ENCODE measurements at regions of chr12 and their contacts with region 1.

Region 1: DNA sequence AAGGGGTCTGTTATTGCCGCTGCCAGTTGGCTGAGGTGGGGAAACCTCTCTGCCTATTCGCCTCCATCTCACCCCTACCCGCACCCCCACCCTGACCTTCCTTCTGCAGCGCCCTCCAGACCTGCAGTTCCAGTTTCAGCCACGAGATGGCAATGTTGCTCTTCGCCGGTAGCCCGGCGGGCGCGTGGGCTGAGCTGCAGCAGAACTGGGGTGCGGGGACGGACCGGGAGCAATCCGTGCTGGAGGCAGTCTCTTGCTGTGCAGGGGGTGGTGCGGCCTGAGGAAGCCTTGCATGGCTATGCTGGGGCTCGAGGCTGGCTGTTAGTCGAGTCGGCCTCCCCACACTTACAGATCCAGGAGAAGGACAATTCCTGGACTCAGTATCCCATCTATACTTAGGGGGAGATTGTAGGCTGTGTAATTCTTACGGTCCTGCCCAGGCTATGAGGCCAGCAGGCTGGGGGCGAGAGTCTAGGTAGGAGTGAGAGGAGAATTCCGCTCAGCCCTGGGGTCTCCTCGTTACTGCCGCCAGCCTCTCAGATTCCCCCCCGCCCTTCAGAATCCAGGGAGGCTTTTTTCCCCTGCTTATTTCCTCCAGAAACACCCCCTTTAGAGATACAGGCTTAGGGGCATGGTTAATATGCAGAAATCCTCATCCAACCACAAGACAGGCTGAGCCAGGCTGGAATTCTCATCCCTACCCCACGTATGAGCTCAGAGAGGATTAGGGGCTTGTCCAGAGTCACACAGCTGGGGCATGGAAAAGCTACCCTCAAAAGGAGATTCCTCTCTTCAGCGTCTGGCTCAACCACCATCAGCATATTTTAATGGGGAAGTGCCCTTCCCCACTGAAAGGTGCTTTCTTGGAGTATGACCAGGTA is 118.2 kb downstream of the AACS start:
- DNase-seq: peak; percentile 90
- ATAC-seq: peak; percentile 64
- H3K4me3 Mint-ChIP-seq: no peak overlapping the region
- H3K27ac Mint-ChIP-seq: no peak overlapping the region
- H3K4me1 Mint-ChIP-seq: peaks cover 6% of the 10 kb centered on the region
- H3K27me3 Mint-ChIP-seq: peaks cover 52% of the 10 kb centered on the region

Region 2: GRCh38 chr12:124646385-124647230 is 536.8 kb before region 1 on chr12:
- CTCF ChIA-PET with region 1: no interaction called
- POLR2A ChIA-PET with region 1: no interaction called
- intact Hi-C with region 1: no loop called
- DNase-seq: peak; percentile 73
- ATAC-seq: peak; percentile 84
- H3K4me3 Mint-ChIP-seq: no peak overlapping the region
- H3K27ac Mint-ChIP-seq: peak overlapping the region; percentile 47
- H3K4me1 Mint-ChIP-seq: peaks cover 17% of the 10 kb centered on the region
- H3K27me3 Mint-ChIP-seq: peaks cover 7% of the 10 kb centered on the region

Region 3: GRCh38 chr12:125169870-125170269 is 13.6 kb before region 1 on chr12:
- CTCF ChIA-PET with region 1: interaction called, 13 read pairs
- POLR2A ChIA-PET with region 1: no interaction called
- intact Hi-C with region 1: no loop called
- DNase-seq: no peak
- ATAC-seq: no peak
- H3K4me3 Mint-ChIP-seq: no peak overlapping the region
- H3K27ac Mint-ChIP-seq: no peak overlapping the region
- H3K4me1 Mint-ChIP-seq: no peaks in the 10 kb centered on the region
- H3K27me3 Mint-ChIP-seq: peaks cover 6% of the 10 kb centered on the region

Region 4: DNA sequence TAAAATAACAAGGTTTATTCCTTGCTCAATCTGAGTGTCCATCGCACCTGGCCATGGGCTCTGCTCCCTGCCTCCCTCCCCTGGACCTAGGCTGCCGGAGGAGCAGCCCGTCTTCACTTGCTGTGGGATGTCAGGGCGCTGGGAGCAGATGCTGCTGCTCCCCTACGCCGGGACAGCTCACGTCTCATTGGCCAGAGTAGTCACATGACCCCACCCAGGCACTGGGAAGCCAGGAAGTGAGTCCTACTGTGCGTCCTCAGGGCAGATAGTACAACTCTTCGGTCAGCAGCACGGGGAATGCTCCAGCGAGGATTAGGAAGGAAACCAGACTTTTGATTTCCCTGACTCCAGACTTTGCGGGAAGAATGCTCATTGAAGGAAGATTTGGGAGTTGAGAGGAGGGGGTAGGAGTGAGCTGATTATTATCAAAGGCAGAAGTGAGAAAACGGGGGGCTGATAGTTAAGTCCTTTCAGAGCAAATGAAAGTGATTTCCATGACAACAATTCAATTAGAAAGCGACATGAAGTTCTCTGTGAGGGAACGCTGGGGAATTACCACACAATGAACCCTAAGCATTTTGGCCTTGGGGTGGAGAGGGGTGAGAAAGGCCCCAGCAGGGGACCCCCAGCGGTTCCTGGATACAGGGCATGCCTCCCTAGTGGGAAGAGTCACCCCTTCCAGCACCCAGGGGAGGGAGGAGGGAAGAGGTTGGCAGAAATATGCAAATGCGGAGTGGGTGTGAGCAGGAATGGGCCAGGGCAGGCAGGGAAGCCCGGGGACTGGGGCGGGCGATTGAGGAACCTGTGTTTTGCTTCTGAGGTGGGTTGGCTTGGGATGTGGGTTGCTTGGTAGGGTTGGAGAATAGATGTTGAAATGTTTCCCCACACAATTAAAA is 97.3 kb after region 1 on chr12:
- CTCF ChIA-PET with region 1: no interaction called
- POLR2A ChIA-PET with region 1: no interaction called
- intact Hi-C with region 1: no loop called
- DNase-seq: no peak
- ATAC-seq: no peak
- H3K4me3 Mint-ChIP-seq: no peak overlapping the region
- H3K27ac Mint-ChIP-seq: no peak overlapping the region
- H3K4me1 Mint-ChIP-seq: no peaks in the 10 kb centered on the region
- H3K27me3 Mint-ChIP-seq: peaks cover 16% of the 10 kb centered on the region

Region 5: GRCh38 chr12:125402874-125403789 is 219.7 kb after region 1 on chr12:
- CTCF ChIA-PET with region 1: interaction called, 18 read pairs
- POLR2A ChIA-PET with region 1: no interaction called
- intact Hi-C with region 1: loop called (anchors 1 kb)
- DNase-seq: no peak
- ATAC-seq: no peak
- H3K4me3 Mint-ChIP-seq: no peak overlapping the region
- H3K27ac Mint-ChIP-seq: no peak overlapping the region
- H3K4me1 Mint-ChIP-seq: no peaks in the 10 kb centered on the region
- H3K27me3 Mint-ChIP-seq: peaks cover 12% of the 10 kb centered on the region

Region 6: GRCh38 chr12:126747530-126748149 is 1564.2 kb after region 1 on chr12:
- CTCF ChIA-PET with region 1: no interaction called
- POLR2A ChIA-PET with region 1: no interaction called
- intact Hi-C with region 1: loop called in 1 of 2 experiments (anchors 2 kb)
- DNase-seq: peak; percentile 80
- ATAC-seq: peak; percentile 71
- H3K4me3 Mint-ChIP-seq: no peak overlapping the region
- H3K27ac Mint-ChIP-seq: no peak overlapping the region
- H3K4me1 Mint-ChIP-seq: no peaks in the 10 kb centered on the region
- H3K27me3 Mint-ChIP-seq: peaks cover 2% of the 10 kb centered on the region